Activated CD4-positive, alpha-beta memory T cell treated with anti-CD3 and anti-CD28 coated beads for 36 hours (primary cell): ENCODE measurements at regions of chr7 and their contacts with region 1.

Region 1: GRCh38 chr7:121278120-121279021 is 50.4 kb upstream of the WNT16 start:
- DNase-seq: no peak
- H3K4me3 Mint-ChIP-seq: no peak overlapping the region
- H3K27ac Mint-ChIP-seq: no peak overlapping the region
- H3K4me1 Mint-ChIP-seq: peaks cover 16% of the 10 kb centered on the region
- H3K27me3 Mint-ChIP-seq: peaks cover 30% of the 10 kb centered on the region

Region 2: DNA sequence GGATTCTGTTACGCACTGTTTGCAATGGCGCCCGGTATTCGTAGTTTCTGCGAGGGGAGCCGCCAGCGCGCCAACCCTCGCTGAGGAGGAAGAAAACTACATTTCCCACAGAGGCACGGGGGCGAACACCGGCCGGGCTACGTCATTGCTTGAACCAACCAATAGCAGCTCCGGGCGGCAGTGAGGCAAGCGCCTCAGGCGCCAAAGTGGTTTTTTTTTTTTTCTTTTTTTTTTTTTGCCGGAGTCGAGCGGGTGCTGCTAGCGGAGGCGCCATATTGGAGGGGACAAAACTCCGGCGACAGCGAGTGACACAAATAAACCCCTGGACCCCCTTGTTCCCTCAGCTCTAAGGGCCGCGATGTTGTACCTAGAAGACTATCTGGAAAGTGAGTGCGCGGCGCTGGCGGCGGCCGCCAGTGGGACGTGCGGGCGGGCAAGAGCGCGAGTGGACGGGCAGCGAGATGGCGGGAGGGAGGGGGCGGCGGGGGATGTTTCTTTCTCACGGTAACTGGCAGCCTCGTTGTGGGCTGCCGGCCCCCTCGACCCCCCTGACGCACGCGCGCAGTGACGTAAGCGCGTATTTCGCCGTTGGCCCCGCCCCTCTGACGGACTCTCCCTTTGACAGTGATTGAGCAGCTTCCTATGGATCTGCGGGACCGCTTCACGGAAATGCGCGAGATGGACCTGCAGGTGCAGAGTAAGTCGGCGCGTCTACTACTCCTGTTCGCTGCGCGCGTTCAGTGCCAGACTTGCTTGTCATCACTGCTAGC is 327.6 kb before region 1 on chr7 and contains the start of gene ING3:
- CTCF ChIA-PET with region 1: no interaction called
- POLR2A ChIA-PET with region 1: no interaction called
- intact Hi-C with region 1: loop called (anchors 10 kb)
- DNase-seq: peak; percentile 98
- H3K4me3 Mint-ChIP-seq: peak within 1 kb of the TSS; percentile 94
- H3K27ac Mint-ChIP-seq: peak within 1 kb of the TSS; percentile 98
- H3K4me1 Mint-ChIP-seq: peaks cover 22% of the 10 kb centered on the region
- H3K27me3 Mint-ChIP-seq: peaks cover 9% of the 10 kb centered on the region
- total RNA-seq, gene ING3: 23.5 to 24.8 TPM

Region 3: GRCh38 chr7:120981888-120982615 is 296.3 kb before region 1 on chr7:
- CTCF ChIA-PET with region 1: no interaction called
- POLR2A ChIA-PET with region 1: no interaction called
- intact Hi-C with region 1: loop called (anchors 5 kb)
- DNase-seq: peak; percentile 27
- H3K4me3 Mint-ChIP-seq: no peak overlapping the region
- H3K27ac Mint-ChIP-seq: peak overlapping the region; percentile 1
- H3K4me1 Mint-ChIP-seq: peaks cover 12% of the 10 kb centered on the region
- H3K27me3 Mint-ChIP-seq: peaks cover 5% of the 10 kb centered on the region

Region 4: GRCh38 chr7:121138262-121138933 is 140.0 kb before region 1 on chr7:
- CTCF ChIA-PET with region 1: no interaction called
- POLR2A ChIA-PET with region 1: no interaction called
- intact Hi-C with region 1: loop called (anchors 2 kb)
- DNase-seq: peak; percentile 14
- H3K4me3 Mint-ChIP-seq: peak overlapping the region; percentile 14
- H3K27ac Mint-ChIP-seq: no peak overlapping the region
- H3K4me1 Mint-ChIP-seq: peaks cover 15% of the 10 kb centered on the region
- H3K27me3 Mint-ChIP-seq: peaks cover 2% of the 10 kb centered on the region

Region 5: GRCh38 chr7:121307021-121307574 is 28.7 kb after region 1 on chr7:
- CTCF ChIA-PET with region 1: no interaction called
- POLR2A ChIA-PET with region 1: interaction called, 3 read pairs
- intact Hi-C with region 1: loop called (anchors 2 kb)
- DNase-seq: no peak
- H3K4me3 Mint-ChIP-seq: no peak overlapping the region
- H3K27ac Mint-ChIP-seq: no peak overlapping the region
- H3K4me1 Mint-ChIP-seq: peaks cover 6% of the 10 kb centered on the region
- H3K27me3 Mint-ChIP-seq: peaks cover 15% of the 10 kb centered on the region